Activated CD4-positive, alpha-beta T cell treated with anti-CD3 and anti-CD28 coated beads for 36 hours (primary cell): ENCODE measurements at regions of chr17 and their contacts with region 1.

Region 1: GRCh38 chr17:33200587-33200986 is 92.5 kb downstream of the ASIC2 start:
- DNase-seq: no peak
- ATAC-seq: no peak
- H3K4me3 Mint-ChIP-seq: no peak overlapping the region
- H3K27ac Mint-ChIP-seq: no peak overlapping the region
- H3K4me1 Mint-ChIP-seq: no peaks in the 10 kb centered on the region
- H3K27me3 Mint-ChIP-seq: peaks cover 9% of the 10 kb centered on the region

Region 2: GRCh38 chr17:32976131-32976530 is 224.5 kb before region 1 on chr17:
- CTCF ChIA-PET with region 1: no interaction called
- POLR2A ChIA-PET with region 1: no interaction called
- intact Hi-C with region 1: no loop called
- DNase-seq: no peak
- ATAC-seq: no peak
- H3K4me3 Mint-ChIP-seq: no peak overlapping the region
- H3K27ac Mint-ChIP-seq: no peak overlapping the region
- H3K4me1 Mint-ChIP-seq: peaks cover 4% of the 10 kb centered on the region
- H3K27me3 Mint-ChIP-seq: peaks cover 15% of the 10 kb centered on the region

Region 3: GRCh38 chr17:33091271-33091670 is 109.3 kb before region 1 on chr17:
- CTCF ChIA-PET with region 1: no interaction called
- POLR2A ChIA-PET with region 1: no interaction called
- intact Hi-C with region 1: no loop called
- DNase-seq: no peak
- ATAC-seq: no peak
- H3K4me3 Mint-ChIP-seq: no peak overlapping the region
- H3K27ac Mint-ChIP-seq: no peak overlapping the region
- H3K4me1 Mint-ChIP-seq: no peaks in the 10 kb centered on the region
- H3K27me3 Mint-ChIP-seq: peaks cover 18% of the 10 kb centered on the region

Region 4: GRCh38 chr17:33267260-33267790 is 66.7 kb after region 1 on chr17:
- CTCF ChIA-PET with region 1: no interaction called
- POLR2A ChIA-PET with region 1: no interaction called
- intact Hi-C with region 1: loop called in 1 of 2 experiments (anchors 10 kb)
- DNase-seq: no peak
- ATAC-seq: no peak
- H3K4me3 Mint-ChIP-seq: no peak overlapping the region
- H3K27ac Mint-ChIP-seq: no peak overlapping the region
- H3K4me1 Mint-ChIP-seq: no peaks in the 10 kb centered on the region
- H3K27me3 Mint-ChIP-seq: peaks cover 3% of the 10 kb centered on the region